T-cell (primary cell): ENCODE measurements at regions of chr6 and their contacts with region 1.

Region 1: GRCh38 chr6:28884423-28885131 is 39.2 kb downstream of the TRIM27 start:
- DNase-seq: peak; percentile 61 to 92 (median 82)
- ATAC-seq: peak; percentile 86 to 88 (median 87)
- H3K4me3 ChIP-seq: peak overlapping the region; percentile 32 to 41
- H3K4me3 Mint-ChIP-seq: peak overlapping the region; percentile 54 to 80 (median 68)
- H3K27ac ChIP-seq: peak overlapping the region; percentile 66
- H3K27ac Mint-ChIP-seq: peak overlapping the region; percentile 87 to 88
- H3K4me1 ChIP-seq: peaks cover 8 to 33% of the 10 kb centered on the region in 2 experiments
- H3K4me1 Mint-ChIP-seq: peaks cover 30 to 44% (median 43%) of the 10 kb centered on the region in 3 donors
- H3K27me3 ChIP-seq: peaks cover 0 to 5% of the 10 kb centered on the region in 2 experiments
- H3K27me3 Mint-ChIP-seq: peaks cover 0 to 6% of the 10 kb centered on the region in 2 donors

Region 2: GRCh38 chr6:28863604-28864320 is 20.8 kb before region 1 on chr6:
- CTCF ChIA-PET with region 1: interaction called, 3 to 23 read pairs
- POLR2A ChIA-PET with region 1: interaction called, 11 to 21 read pairs
- DNase-seq: peak; percentile 58 to 92 (median 77)
- ATAC-seq: peak; percentile 26 to 52 (median 34)
- H3K4me3 ChIP-seq: peak overlapping the region; percentile 75 to 92
- H3K4me3 Mint-ChIP-seq: peak overlapping the region; percentile 87 to 98 (median 90)
- H3K27ac ChIP-seq: peak overlapping the region; percentile 57
- H3K27ac Mint-ChIP-seq: peak overlapping the region; percentile 94 to 95
- H3K4me1 ChIP-seq: peaks cover 10 to 31% of the 10 kb centered on the region in 2 experiments
- H3K4me1 Mint-ChIP-seq: peaks cover 45 to 50% (median 50%) of the 10 kb centered on the region in 3 donors
- H3K27me3 ChIP-seq: no peaks in the 10 kb centered on the region
- H3K27me3 Mint-ChIP-seq: peaks cover 0 to 5% of the 10 kb centered on the region in 2 donors

Region 3: DNA sequence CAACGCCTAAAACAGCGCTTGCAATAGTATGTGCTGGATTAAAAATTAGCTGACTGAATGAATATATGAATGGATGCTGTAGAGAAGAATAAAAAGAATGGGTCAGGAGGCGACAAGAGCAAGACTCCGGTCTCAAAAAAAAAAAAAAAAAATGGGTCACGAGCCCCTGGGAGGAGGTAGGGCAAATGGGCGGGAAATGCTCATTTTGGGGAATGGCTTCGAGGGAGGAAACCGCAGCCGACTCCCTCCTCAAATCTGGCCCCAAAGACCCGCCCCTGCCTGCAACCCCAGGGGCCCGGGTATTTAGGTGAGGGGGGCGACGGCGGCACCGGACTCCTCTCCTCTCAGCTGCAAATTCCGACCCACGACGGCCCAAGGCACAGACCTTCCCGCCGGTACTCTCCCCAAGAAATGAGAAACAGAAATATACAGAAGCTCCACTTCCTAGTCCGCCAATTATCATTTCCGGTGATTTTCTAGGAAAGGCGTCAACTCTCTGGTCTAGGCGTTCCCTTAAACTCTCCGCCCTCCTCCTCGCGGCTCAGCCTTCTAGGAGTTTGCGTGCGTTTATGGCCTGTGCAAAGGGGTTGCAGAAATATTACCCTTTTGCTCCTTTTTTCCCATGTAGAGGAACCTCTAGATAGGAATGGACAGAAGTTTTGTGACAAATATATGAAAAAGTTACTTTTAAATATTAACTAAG is 120.8 kb after region 1 on chr6 and contains the start of gene ZNF311:
- CTCF ChIA-PET with region 1: interaction called in 1 of 2 experiments, 3 read pairs
- POLR2A ChIA-PET with region 1: interaction called in 1 of 2 experiments, 15 read pairs
- DNase-seq: peak in 7 of 35 experiments; percentile 21 to 61 (median 29)
- ATAC-seq: peak; percentile 69 to 98 (median 96)
- H3K4me3 ChIP-seq: peak within 1 kb of the TSS; percentile 58 to 61
- H3K4me3 Mint-ChIP-seq: peak within 1 kb of the TSS; percentile 86 to 92 (median 92)
- H3K27ac ChIP-seq: no peak within 1 kb of the TSS
- H3K27ac Mint-ChIP-seq: peak within 1 kb of the TSS; percentile 79 to 87
- H3K4me1 ChIP-seq: peaks cover 0 to 7% of the 10 kb centered on the region in 2 experiments
- H3K4me1 Mint-ChIP-seq: peaks cover 16 to 22% (median 20%) of the 10 kb centered on the region in 3 donors
- H3K27me3 ChIP-seq: peaks cover 2 to 12% of the 10 kb centered on the region in 2 experiments
- H3K27me3 Mint-ChIP-seq: peaks cover 2 to 13% of the 10 kb centered on the region in 2 donors
- total RNA-seq, gene ZNF311: 0.22 to 0.61 (median 0.30) TPM